Calu3 (cell line): ENCODE measurements at regions of chr5 and their contacts with region 1.

Region 1: DNA sequence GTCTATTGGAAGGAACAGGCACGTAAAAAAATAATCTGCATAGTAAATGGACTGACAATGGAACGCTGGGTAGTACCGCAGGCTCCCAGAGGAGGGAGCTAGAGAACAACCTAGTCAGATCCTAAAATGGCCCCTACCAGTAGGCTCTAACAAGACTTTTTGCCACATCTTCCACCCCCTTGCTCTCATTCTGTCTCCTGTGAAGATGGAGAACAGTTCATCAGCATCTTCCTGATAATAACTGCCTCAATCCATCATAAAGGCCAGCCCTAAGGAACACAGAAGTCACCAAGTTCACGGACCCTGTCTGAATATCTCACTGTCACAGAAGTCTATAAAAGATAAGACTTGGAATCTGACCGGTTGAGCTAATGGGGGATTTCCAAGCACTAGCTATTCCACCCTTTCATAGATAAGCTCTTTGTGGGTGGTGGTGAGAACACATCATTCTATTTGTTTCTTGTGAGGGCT is 133.4 kb downstream of the SLC1A3 start:
- DNase-seq: peak; percentile 83
- H3K4me3 Mint-ChIP-seq: peak overlapping the region; percentile 37
- H3K27ac Mint-ChIP-seq: peak overlapping the region; percentile 13
- H3K4me1 Mint-ChIP-seq: peaks cover 53% of the 10 kb centered on the region
- H3K27me3 Mint-ChIP-seq: peaks cover 16% of the 10 kb centered on the region
- CTCF ChIP-seq: peak; percentile 73

Region 2: DNA sequence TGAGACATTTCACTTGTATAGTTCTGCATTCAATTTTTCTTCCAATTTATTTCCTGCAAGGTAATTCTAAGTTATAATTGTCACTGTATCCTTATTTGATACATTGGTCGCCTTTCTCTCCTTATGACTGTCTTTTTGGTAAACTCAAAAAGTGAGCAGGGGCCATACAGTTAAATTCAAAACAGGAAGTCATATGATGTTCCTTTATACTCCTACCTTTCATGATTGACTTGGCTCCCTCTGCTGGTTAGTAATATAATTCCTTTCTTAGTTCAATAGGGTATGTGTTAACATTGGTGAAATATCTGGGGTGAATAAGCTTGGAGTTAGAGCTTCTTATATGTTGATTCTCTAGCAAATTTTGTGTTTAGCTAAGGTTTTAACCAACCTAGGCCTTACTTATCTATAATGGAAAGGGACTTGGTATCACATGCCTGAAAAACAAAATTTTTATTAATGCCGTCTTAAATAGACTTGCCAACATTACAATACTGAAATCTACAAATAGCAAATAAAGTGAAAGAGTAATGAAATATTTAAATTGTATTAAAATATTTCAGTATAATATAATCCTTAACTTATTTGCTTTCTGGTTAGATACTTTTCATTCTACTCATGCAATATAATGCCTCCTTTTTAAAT is 130.7 kb after region 1 on chr5:
- CTCF ChIA-PET with region 1: interaction called, 14 read pairs
- intact Hi-C with region 1: loop called (anchors 1 kb)
- DNase-seq: no peak
- H3K4me3 Mint-ChIP-seq: no peak overlapping the region
- H3K27ac Mint-ChIP-seq: no peak overlapping the region
- H3K4me1 Mint-ChIP-seq: peaks cover 21% of the 10 kb centered on the region
- H3K27me3 Mint-ChIP-seq: no peaks in the 10 kb centered on the region
- CTCF ChIP-seq: no peak

Region 3: GRCh38 chr5:36944607-36945225 is 204.9 kb after region 1 on chr5:
- CTCF ChIA-PET with region 1: interaction called, 3 read pairs
- intact Hi-C with region 1: loop called (anchors 5 kb)
- DNase-seq: no peak
- H3K4me3 Mint-ChIP-seq: no peak overlapping the region
- H3K27ac Mint-ChIP-seq: no peak overlapping the region
- H3K4me1 Mint-ChIP-seq: peaks cover 34% of the 10 kb centered on the region
- H3K27me3 Mint-ChIP-seq: no peaks in the 10 kb centered on the region
- CTCF ChIP-seq: peak; percentile 30

Region 4: GRCh38 chr5:37005946-37006540 is 266.3 kb after region 1 on chr5:
- CTCF ChIA-PET with region 1: interaction called, 6 read pairs
- intact Hi-C with region 1: loop called (anchors 2 kb)
- DNase-seq: no peak
- H3K4me3 Mint-ChIP-seq: no peak overlapping the region
- H3K27ac Mint-ChIP-seq: no peak overlapping the region
- H3K4me1 Mint-ChIP-seq: no peaks in the 10 kb centered on the region
- H3K27me3 Mint-ChIP-seq: no peaks in the 10 kb centered on the region
- CTCF ChIP-seq: peak; percentile 34